ENCODE measurements at regions of chr5 and their contacts with region 1.

Region 1: GRCh38 chr5:112707187-112708102 is 30.2 kb upstream of the APC start:
- DNase-seq: peak; percentile 99

Region 2: DNA sequence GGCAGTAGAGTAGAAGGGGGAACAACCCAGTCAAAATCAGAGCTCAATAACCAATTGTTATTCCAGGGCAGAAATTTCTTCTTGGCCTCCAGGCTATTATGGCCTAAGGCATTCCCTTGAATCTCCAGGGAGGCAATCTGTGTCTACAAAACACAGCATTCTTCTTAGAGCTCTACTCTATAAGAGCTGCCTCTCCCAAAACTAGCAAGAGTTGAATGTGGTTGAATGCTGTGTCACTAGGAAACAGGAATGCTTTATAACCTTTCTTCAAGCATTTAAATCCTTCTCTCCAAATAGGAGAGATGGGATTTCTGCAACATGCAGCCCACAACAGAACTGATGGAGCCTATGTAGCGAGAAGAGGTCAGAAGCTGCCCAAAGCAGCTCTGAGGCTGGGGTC is 66.9 kb before region 1 on chr5:
- intact Hi-C with region 1: loop called (anchors 5 kb)
- DNase-seq: no peak

Region 3: DNA sequence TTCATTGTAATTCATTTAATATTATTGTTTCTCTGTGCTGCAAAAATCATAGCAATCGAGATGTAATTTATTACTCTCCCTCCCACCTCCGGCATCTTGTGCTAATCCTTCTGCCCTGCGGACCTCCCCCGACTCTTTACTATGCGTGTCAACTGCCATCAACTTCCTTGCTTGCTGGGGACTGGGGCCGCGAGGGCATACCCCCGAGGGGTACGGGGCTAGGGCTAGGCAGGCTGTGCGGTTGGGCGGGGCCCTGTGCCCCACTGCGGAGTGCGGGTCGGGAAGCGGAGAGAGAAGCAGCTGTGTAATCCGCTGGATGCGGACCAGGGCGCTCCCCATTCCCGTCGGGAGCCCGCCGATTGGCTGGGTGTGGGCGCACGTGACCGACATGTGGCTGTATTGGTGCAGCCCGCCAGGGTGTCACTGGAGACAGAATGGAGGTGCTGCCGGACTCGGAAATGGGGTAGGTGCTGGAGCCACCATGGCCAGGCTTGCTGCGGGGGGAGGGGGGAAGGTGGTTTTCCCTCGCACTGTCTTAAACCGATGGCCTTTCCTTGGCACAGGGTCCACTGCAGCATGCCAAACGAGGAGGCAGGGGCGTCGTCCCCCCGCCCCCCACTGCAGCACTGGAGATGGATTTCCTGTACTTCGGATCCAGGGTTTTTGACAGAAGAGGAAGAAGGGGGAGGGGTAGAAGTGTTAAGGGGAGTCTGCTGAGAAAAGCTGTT is 30.2 kb after region 1 on chr5 and contains the start of gene APC:
- intact Hi-C with region 1: loop called (anchors 1 kb)
- DNase-seq: peak; percentile 96
- total RNA-seq, gene APC: 39.5 TPM

Region 4: DNA sequence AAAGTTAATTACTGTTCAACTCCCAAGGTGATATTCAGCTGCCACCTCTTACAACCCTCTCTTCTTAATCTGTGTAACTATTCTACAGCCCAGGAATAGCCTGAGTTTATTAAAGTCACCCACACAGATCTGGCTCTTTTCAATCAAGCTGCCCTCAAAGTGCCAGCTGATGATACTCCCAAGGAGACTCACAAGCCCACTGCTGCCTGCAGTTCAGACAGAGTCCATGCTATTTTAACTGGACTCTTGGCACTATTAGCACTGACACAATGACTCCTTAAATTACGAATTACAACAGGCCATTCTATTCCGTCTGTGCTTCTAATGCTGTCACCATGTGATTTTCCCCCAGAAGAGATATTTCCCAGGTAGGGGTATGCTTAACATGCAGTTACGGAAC is 188.2 kb after region 1 on chr5:
- intact Hi-C with region 1: no loop called
- DNase-seq: no peak

Measured in cardiac septum (tissue), 1 donor.